HCT116 (cell line): ENCODE measurements at regions of chr10 and their contacts with region 1.

Region 1: DNA sequence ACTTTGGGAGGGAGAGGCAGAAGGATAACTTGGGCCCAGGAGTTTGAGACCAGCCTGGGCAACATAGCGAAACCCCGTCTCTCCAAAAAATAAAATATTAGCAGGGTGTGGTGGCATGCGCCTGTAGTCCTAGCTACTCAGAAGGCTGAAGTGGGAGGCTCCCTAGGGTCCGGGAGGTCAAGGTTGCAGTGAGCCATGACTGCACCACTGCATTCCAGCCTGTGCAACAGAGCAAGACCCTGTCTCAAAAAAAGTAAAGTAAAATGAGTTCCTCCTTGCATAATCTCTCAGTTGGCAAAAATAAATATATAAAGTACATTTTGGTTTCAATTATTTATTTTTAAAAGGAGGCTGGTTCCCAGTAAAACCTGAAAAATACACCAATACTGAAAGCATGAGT is 11.8 kb downstream of the NANOS1 start:
- DNase-seq: no peak
- ATAC-seq: no peak
- H3K4me3 ChIP-seq: no peak overlapping the region
- H3K27ac ChIP-seq: no peak overlapping the region
- H3K4me1 ChIP-seq: no peaks in the 10 kb centered on the region
- H3K27me3 ChIP-seq: no peaks in the 10 kb centered on the region
- CTCF ChIP-seq: no peak
- POLR2A ChIP-seq: no peak
- RAD21 ChIP-seq: no peak

Region 2: GRCh38 chr10:118781541-118781940 is 259.8 kb before region 1 on chr10:
- CTCF ChIA-PET with region 1: no interaction called
- POLR2A ChIA-PET with region 1: no interaction called
- RAD21 ChIA-PET with region 1: no interaction called
- intact Hi-C with region 1: no loop called
- DNase-seq: no peak
- ATAC-seq: no peak
- H3K4me3 ChIP-seq: no peak overlapping the region
- H3K27ac ChIP-seq: no peak overlapping the region
- H3K4me1 ChIP-seq: no peaks in the 10 kb centered on the region
- H3K27me3 ChIP-seq: no peaks in the 10 kb centered on the region
- CTCF ChIP-seq: no peak
- POLR2A ChIP-seq: no peak
- RAD21 ChIP-seq: no peak

Region 3: GRCh38 chr10:119061352-119061751 is 20.0 kb after region 1 on chr10:
- CTCF ChIA-PET with region 1: no interaction called
- POLR2A ChIA-PET with region 1: no interaction called
- RAD21 ChIA-PET with region 1: no interaction called
- intact Hi-C with region 1: loop called (anchors 2 kb)
- DNase-seq: no peak
- ATAC-seq: no peak
- H3K4me3 ChIP-seq: no peak overlapping the region
- H3K27ac ChIP-seq: no peak overlapping the region
- H3K4me1 ChIP-seq: no peaks in the 10 kb centered on the region
- H3K27me3 ChIP-seq: no peaks in the 10 kb centered on the region
- CTCF ChIP-seq: no peak
- POLR2A ChIP-seq: no peak
- RAD21 ChIP-seq: no peak

Region 4: DNA sequence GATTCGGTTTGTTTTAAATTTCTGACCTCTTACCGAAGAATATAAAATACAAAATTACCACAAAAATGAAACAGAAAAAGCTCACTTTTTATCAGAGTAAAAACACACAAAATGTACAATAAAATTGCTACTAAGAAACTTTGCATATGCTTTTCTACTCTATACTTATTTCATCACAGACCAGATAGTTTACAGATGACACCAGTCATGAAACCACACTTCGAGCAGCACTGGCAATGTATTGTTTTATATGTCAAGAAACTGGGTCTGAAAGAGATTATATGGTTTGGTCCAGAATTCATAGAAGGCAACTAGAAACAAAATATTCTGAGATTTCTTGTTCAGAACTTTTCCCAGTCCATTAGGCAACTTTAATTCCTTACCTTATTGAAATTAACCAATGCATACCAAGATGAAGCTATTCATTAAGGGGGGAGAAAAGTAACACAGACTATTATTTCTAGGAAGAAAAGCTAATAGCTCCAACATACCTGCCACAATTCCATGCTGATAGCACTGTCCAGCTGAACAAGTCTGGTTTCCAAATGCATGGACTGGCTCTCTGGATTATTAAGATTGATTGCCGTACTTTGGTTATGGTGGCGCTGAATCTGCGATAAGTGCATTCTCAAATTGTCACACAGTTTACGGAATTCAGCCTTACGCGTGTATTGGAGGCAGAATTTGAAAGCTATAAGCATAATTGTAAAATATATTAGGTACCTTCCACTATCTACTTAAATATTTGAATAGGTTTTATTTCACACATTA is 29.3 kb after region 1 on chr10:
- CTCF ChIA-PET with region 1: no interaction called
- POLR2A ChIA-PET with region 1: no interaction called
- RAD21 ChIA-PET with region 1: no interaction called
- intact Hi-C with region 1: loop called (anchors 5 kb)
- DNase-seq: no peak
- ATAC-seq: no peak
- H3K4me3 ChIP-seq: no peak overlapping the region
- H3K27ac ChIP-seq: no peak overlapping the region
- H3K4me1 ChIP-seq: no peaks in the 10 kb centered on the region
- H3K27me3 ChIP-seq: no peaks in the 10 kb centered on the region
- CTCF ChIP-seq: no peak
- POLR2A ChIP-seq: no peak
- RAD21 ChIP-seq: no peak